ENCODE measurements at regions of chr2 and their contacts with region 1.

Region 1: DNA sequence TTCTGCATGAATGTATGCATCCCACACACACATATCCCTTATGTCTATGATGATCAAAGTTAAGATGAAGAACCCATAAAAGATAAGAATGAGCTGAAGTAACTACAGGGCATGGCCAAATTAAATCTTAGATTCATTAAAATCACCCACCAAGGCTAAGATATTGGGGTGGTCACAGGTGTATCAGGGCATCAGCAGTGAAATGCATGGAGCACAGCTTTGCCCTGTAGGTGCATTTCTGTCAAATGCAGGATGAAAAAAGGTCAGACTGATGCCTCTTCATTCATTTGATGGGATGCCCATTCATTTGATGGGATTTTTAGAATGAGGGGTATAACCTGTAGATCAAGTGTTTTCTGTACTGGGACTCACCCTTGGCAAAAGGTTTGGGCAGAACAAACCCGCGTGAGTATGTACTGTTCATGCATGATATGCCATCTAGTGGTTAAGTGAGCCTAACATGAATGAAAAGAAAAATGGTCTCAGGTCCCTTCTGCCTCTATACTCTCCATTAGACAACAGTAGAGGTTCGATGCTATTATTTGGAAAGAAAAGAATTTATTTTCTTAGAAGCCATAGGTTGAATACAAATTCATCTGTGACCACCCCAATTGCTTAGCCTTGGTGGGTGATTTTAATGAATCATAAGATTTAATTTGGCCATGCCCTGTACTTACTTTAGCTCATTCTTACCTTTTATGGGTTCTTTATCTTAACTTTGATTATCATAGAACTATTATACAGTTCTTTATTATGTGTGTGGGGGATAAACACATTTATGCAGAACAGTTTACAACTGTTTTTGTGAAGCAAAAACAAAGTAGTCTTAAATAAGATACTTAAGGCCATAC is 43.2 kb upstream of the NOSTRIN start:
- DNase-seq: peak; percentile 66
- H3K4me3 ChIP-seq: no peak overlapping the region
- H3K27ac ChIP-seq: no peak overlapping the region
- H3K4me1 ChIP-seq: peaks cover 0 to 12% of the 10 kb centered on the region in 2 experiments; a peak in 2 of 4 replicates
- H3K27me3 ChIP-seq: no peaks in the 10 kb centered on the region
- CTCF ChIP-seq: peak; percentile 70
- EP300 ChIP-seq: no peak
- RAD21 ChIP-seq: peak; percentile 86

Region 2: DNA sequence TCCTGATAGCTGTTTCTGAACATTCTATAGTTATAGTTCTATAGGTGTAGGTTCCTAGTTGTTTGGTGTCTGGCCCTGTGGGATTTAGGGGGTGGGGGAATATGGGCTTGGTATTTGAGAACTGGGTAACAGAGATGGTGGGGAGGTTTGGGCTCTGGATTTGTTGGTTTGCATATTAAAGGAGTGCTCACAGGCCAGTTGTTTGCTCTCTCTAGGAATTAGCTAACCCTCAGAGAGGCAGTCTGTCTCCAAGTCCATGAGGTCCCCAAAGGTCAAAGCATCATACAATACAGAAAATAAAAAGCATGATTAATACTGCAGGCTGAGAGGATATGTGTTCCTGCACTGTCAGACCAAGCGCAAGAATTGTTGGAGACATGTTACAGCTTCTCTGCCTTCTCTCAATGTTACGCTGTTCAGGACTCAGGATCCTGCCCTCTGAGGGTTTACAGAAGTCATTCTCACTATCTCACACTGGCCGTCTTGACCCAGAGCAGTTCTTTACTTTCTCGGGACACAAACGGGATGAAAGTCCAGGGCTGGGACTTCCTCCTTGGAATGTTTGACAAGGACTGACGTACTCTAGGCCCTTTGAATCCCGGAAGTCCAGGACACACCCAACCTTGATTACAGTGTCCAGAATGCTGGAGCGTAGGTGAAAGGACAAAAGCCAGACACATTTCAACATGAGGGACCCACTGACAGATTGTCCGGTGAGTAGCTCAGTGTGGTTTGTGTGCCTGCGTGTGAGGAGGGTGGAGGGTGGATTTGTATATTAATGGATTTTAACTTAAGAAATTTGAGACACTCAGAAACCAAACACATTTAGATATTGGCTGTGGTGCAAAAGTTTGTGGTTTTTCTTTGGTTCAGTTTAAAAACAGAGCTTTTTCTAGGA is 43.0 kb after region 1 on chr2 and contains the start of gene NOSTRIN:
- CTCF ChIA-PET with region 1: no interaction called
- POLR2A ChIA-PET with region 1: no interaction called
- DNase-seq: no peak
- H3K4me3 ChIP-seq: no peak within 1 kb of the TSS
- H3K27ac ChIP-seq: no peak within 1 kb of the TSS
- H3K4me1 ChIP-seq: peaks cover 0 to 2% of the 10 kb centered on the region in 2 experiments; a peak in 1 of 4 replicates
- H3K27me3 ChIP-seq: no peaks in the 10 kb centered on the region
- CTCF ChIP-seq: no peak
- EP300 ChIP-seq: no peak
- RAD21 ChIP-seq: no peak
- polyA plus RNA-seq, gene NOSTRIN: not detected in 2 replicates

Region 3: GRCh38 chr2:168920504-168921157 is 161.4 kb after region 1 on chr2:
- CTCF ChIA-PET with region 1: interaction called, 11 read pairs
- POLR2A ChIA-PET with region 1: no interaction called
- DNase-seq: peak; percentile 25
- H3K4me3 ChIP-seq: no peak overlapping the region
- H3K27ac ChIP-seq: no peak overlapping the region
- H3K4me1 ChIP-seq: no peaks in the 10 kb centered on the region
- H3K27me3 ChIP-seq: peaks cover 2% of the 10 kb centered on the region
- CTCF ChIP-seq: peak; percentile 75
- EP300 ChIP-seq: no peak
- RAD21 ChIP-seq: peak; percentile 76